Activated CD4-positive, alpha-beta T cell treated with anti-CD3 and anti-CD28 coated beads for 36 hours (primary cell): ENCODE measurements at regions of chr1 and their contacts with region 1.

Region 1: GRCh38 chr1:241924080-241924808 is 33.3 kb upstream of the BECN2 start:
- DNase-seq: no peak
- ATAC-seq: no peak
- H3K4me3 Mint-ChIP-seq: no peak overlapping the region
- H3K27ac Mint-ChIP-seq: no peak overlapping the region
- H3K4me1 Mint-ChIP-seq: no peaks in the 10 kb centered on the region
- H3K27me3 Mint-ChIP-seq: no peaks in the 10 kb centered on the region

Region 2: GRCh38 chr1:242673652-242674051 is 749.4 kb after region 1 on chr1:
- CTCF ChIA-PET with region 1: no interaction called
- POLR2A ChIA-PET with region 1: no interaction called
- intact Hi-C with region 1: loop called in 1 of 2 experiments (anchors 5 kb)
- DNase-seq: no peak
- ATAC-seq: no peak
- H3K4me3 Mint-ChIP-seq: no peak overlapping the region
- H3K27ac Mint-ChIP-seq: no peak overlapping the region
- H3K4me1 Mint-ChIP-seq: no peaks in the 10 kb centered on the region
- H3K27me3 Mint-ChIP-seq: no peaks in the 10 kb centered on the region